ENCODE measurements at regions of chr15 and their contacts with region 1.

Region 1: DNA sequence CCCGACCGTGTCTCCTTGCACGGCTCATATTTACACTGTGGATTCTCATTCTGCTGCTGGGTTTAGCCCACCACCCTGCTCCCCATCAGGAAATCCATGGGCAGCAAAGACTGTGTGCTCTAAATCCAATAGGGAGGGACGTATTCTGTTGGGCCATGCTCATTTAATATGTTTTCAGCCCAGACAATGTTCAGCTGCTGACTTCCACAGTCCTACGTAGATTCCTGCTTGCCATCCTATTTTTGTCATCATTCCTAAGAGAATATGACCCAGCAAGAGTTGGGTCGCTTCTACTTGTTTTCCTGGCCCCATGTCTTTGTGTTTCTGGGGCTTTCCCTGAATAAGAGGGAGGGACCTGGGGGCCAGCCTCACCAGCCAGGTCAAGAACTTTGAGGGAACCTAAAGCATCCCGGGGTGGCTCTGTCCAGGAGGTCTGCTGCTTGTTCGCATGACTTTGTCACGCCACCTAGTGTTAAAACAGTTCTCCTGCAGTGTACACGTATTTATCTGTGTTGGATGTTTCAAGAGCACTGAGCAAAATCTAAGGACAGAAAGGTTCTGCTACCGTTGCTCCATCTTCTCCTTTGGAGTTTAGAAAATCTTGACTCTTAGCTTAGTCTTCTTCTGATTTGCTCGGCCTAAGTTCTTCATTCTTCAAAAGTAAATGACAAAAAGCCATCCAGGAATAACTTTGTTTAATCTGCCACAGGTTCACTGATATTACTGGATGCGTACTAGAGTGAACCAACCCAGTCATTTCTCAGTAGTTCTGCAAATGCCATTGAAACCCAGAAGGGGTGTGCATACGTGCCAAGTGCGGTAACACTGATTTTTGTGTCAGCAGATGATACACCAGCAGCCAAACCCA is 79.8 kb upstream of the NR2E3 start:
- DNase-seq: peak in 1 of 2 donors; percentile 44
- H3K4me3 ChIP-seq: no peak overlapping the region
- H3K27ac ChIP-seq: peak overlapping the region in 1 of 2 donors; percentile 20
- H3K4me1 ChIP-seq: no peaks in the 10 kb centered on the region
- H3K27me3 ChIP-seq: no peaks in the 10 kb centered on the region
- CTCF ChIP-seq: peak; percentile 71 to 78 (median 72)
- POLR2A ChIP-seq: no peak

Region 2: GRCh38 chr15:71237456-71238188 is 492.9 kb before region 1 on chr15:
- intact Hi-C with region 1: no loop called
- DNase-seq: no peak
- H3K4me3 ChIP-seq: no peak overlapping the region
- H3K27ac ChIP-seq: no peak overlapping the region
- H3K4me1 ChIP-seq: no peaks in the 10 kb centered on the region
- H3K27me3 ChIP-seq: no peaks in the 10 kb centered on the region
- CTCF ChIP-seq: no peak
- POLR2A ChIP-seq: no peak

Region 3: DNA sequence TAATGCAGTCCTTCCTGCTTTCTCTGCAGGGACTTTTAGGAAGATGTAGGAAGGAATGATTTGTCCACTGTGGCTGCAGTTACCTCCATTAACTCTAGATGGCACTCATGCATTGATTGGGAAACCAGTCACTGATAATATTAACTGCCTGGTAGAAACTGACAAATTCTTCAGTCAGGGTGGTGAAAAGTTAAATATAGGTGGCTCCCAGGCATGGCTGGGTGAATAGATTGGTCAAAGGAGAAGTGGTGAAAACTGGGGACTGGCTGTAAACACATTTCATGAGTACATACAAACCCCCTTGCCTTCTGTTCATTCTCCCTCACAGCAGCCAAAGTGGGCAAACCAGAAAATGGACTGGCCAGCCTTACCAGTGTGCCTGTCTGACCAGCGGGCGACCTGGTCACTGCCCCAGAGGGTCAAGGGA is 281.8 kb before region 1 on chr15:
- intact Hi-C with region 1: loop called (anchors 10 kb)
- DNase-seq: peak in 1 of 2 donors; percentile 50
- H3K4me3 ChIP-seq: no peak overlapping the region
- H3K27ac ChIP-seq: peak overlapping the region; percentile 61 to 84
- H3K4me1 ChIP-seq: peaks cover 0 to 2% of the 10 kb centered on the region in 2 donors
- H3K27me3 ChIP-seq: no peaks in the 10 kb centered on the region
- CTCF ChIP-seq: peak; percentile 93 to 94 (median 93)
- POLR2A ChIP-seq: no peak

Region 4: GRCh38 chr15:71575474-71576045 is 155.0 kb before region 1 on chr15:
- intact Hi-C with region 1: no loop called
- DNase-seq: no peak
- H3K4me3 ChIP-seq: no peak overlapping the region
- H3K27ac ChIP-seq: no peak overlapping the region
- H3K4me1 ChIP-seq: no peaks in the 10 kb centered on the region
- H3K27me3 ChIP-seq: no peaks in the 10 kb centered on the region
- CTCF ChIP-seq: peak; percentile 29 to 47 (median 37)
- POLR2A ChIP-seq: no peak

Measured in breast epithelium (tissue), 4 donors.